Heart left ventricle (tissue), 16 donors: ENCODE measurements at regions of chr2 and their contacts with region 1.

Region 1: GRCh38 chr2:41782306-41783158 is 265.3 kb upstream of the PKDCC start:
- DNase-seq: peak in 1 of 5 donors; percentile 18
- ATAC-seq: no peak
- H3K4me3 ChIP-seq: no peak overlapping the region
- H3K27ac ChIP-seq: no peak overlapping the region
- H3K4me1 ChIP-seq: peaks cover 0 to 12% (median 0%) of the 10 kb centered on the region in 12 donors
- H3K27me3 ChIP-seq: no peaks in the 10 kb centered on the region
- CTCF ChIP-seq: peak; percentile 70 to 91 (median 84)
- POLR2A ChIP-seq: no peak

Region 2: GRCh38 chr2:39920307-39920801 is 1862.2 kb before region 1 on chr2:
- intact Hi-C with region 1: loop called in 5 of 10 experiments (anchors 10 kb)
- DNase-seq: no peak
- ATAC-seq: no peak
- H3K4me3 ChIP-seq: no peak overlapping the region
- H3K27ac ChIP-seq: no peak overlapping the region
- H3K4me1 ChIP-seq: peaks cover 0 to 3% (median 0%) of the 10 kb centered on the region in 12 donors
- H3K27me3 ChIP-seq: no peaks in the 10 kb centered on the region
- CTCF ChIP-seq: no peak
- POLR2A ChIP-seq: no peak

Region 3: DNA sequence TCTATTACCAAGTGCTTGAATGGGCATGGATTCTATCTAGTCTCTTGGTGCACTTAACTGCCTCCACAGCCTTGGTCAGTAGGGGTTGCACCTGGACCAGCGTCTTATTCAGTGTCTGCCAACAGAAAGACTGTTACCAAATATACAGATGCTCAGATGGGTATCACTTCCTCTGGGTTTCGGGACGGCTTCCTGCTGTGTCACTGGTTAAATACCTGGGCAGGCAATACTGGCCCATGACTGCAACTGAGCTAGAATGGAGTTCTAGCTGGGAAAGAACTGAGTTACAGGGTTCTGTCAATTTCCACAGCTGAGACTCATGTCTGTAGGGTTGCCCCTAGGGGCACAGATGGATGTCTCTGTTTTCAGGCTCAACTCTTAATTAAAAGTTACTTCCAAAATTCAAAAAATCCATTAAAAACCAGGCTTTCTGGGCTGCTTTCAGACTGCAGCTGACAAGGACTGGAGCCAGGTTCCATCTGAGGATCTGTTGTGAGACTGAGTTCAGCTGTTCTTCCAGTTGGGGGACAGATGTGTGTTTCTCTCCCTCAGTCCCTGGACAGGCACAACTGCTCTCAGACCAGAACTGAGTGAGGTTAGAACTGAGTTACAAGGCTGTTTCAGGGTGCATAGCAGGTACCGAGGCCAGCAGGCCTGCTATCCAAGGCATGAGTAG is 541.1 kb before region 1 on chr2:
- intact Hi-C with region 1: loop called in 1 of 10 experiments (anchors 5 kb)
- DNase-seq: peak in 4 of 5 donors; percentile 53 to 60 (median 56)
- ATAC-seq: peak; percentile 76 to 94 (median 82)
- H3K4me3 ChIP-seq: no peak overlapping the region
- H3K27ac ChIP-seq: peak overlapping the region in 3 of 12 donors; percentile 31 to 58 (median 40)
- H3K4me1 ChIP-seq: peaks cover 0 to 17% (median 0%) of the 10 kb centered on the region in 12 donors
- H3K27me3 ChIP-seq: no peaks in the 10 kb centered on the region
- CTCF ChIP-seq: no peak
- POLR2A ChIP-seq: no peak

Region 4: DNA sequence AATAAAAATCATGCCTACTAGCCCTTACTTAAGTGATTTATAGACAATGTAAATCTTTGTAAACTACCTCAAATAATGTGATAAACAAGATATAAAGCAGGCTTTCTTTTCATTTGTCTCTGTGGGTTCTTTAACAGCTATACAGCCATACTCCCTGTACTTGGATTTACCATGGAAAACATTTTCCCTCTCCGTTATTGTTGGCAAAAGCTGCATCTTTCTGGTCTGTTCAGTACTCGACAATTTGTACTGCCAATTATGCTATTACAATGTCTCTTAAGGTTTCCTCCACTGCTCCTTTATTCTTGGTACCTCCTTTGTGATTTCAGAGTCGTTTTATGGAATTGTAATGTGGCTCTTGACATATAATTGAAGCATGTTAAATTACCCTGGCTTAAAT is 161.0 kb before region 1 on chr2:
- intact Hi-C with region 1: no loop called
- DNase-seq: no peak
- ATAC-seq: no peak
- H3K4me3 ChIP-seq: no peak overlapping the region
- H3K27ac ChIP-seq: no peak overlapping the region
- H3K4me1 ChIP-seq: peaks cover 0 to 3% (median 0%) of the 10 kb centered on the region in 12 donors
- H3K27me3 ChIP-seq: no peaks in the 10 kb centered on the region
- CTCF ChIP-seq: no peak
- POLR2A ChIP-seq: no peak

Region 5: DNA sequence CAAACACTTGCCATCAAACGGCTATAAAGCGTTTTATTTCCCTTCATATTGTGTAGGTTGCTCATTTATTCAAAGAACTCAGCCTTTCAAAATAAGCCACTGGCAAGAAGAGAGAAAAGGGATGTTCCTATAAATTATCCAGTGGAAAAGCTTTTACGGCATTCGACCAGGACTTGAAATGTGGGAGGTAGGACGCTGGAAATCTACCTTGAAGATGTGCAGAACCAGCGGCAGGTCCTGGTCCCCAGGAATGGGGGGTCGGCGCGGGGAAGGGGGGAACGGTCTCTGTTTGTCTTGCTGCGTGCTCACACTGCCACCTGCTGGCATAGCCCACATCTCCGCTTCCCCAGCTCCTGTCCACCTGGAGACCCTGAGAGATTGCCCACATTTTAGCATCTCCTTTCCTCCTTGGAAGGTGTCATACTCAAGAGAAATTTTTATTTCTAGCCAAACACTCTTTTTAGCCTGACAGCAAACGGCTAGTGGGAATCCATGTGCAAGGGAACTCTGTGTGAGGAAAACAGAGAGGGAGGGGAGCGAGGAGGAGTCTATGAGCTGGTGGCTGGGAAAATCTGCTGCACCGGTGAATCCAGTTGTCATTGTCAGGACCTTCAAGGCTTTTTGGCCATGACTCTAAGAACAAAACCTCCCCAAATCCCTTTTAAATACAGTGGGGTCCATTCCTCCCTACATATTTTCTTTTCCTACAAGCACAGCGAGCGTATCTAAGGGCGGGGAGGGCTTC is 83.7 kb before region 1 on chr2:
- intact Hi-C with region 1: loop called in 2 of 10 experiments (anchors 5 kb)
- DNase-seq: peak; percentile 44 to 66 (median 48)
- ATAC-seq: peak; percentile 59 to 71 (median 68)
- H3K4me3 ChIP-seq: peak overlapping the region in 8 of 12 donors; percentile 18 to 42 (median 27)
- H3K27ac ChIP-seq: no peak overlapping the region
- H3K4me1 ChIP-seq: peaks cover 0 to 10% (median 0%) of the 10 kb centered on the region in 12 donors
- H3K27me3 ChIP-seq: no peaks in the 10 kb centered on the region
- CTCF ChIP-seq: peak; percentile 71 to 95 (median 88)
- POLR2A ChIP-seq: no peak

Region 6: DNA sequence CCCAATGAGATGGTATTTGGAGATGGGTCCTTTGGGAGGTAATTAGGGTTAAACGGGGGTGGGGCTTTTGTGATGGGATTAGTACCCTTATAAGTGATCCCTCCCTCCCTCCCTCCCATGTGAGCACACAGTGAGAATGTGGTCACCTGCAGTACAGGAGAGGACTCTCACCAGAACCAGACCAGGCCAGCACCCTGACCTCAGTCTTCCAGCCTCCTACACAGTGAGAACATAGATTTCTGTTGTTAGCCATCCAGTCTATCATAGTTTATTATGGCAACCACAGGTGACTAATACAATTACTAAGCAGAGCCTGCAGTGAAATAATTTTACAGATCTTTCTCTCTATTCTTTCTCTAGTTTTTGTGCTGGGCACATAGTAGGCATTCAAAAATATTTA is 127.6 kb after region 1 on chr2:
- intact Hi-C with region 1: no loop called
- DNase-seq: no peak
- ATAC-seq: no peak
- H3K4me3 ChIP-seq: no peak overlapping the region
- H3K27ac ChIP-seq: no peak overlapping the region
- H3K4me1 ChIP-seq: peaks cover 0 to 18% (median 4%) of the 10 kb centered on the region in 12 donors
- H3K27me3 ChIP-seq: no peaks in the 10 kb centered on the region
- CTCF ChIP-seq: no peak
- POLR2A ChIP-seq: no peak